Naive thymus-derived CD4-positive, alpha-beta T cell (primary cell): ENCODE measurements at regions of chr3 and their contacts with region 1.

Region 1: GRCh38 chr3:100400780-100401673 is at the starts of genes LNP1 and TOMM70:
- DNase-seq: peak; percentile 83 to 95 (median 94)
- ATAC-seq: peak; percentile 93
- H3K4me3 ChIP-seq: peak within 1 kb of the TSS; percentile 90
- H3K4me3 Mint-ChIP-seq: peak within 1 kb of the TSS; percentile 87 to 99 (median 96)
- H3K27ac ChIP-seq: peak within 1 kb of the TSS; percentile 85
- H3K27ac Mint-ChIP-seq: peak within 1 kb of the TSS; percentile 90 to 98 (median 95)
- H3K4me1 ChIP-seq: peaks cover 21 to 34% of the 10 kb centered on the region in 2 donors
- H3K4me1 Mint-ChIP-seq: peaks cover 36 to 90% (median 77%) of the 10 kb centered on the region in 7 donors
- H3K27me3 ChIP-seq: no peaks in the 10 kb centered on the region
- H3K27me3 Mint-ChIP-seq: no peaks in the 10 kb centered on the region
- total RNA-seq, gene LNP1: 0.82 to 2.4 (median 1.6) TPM
- total RNA-seq, gene TOMM70: 18.3 to 43.7 (median 35.5) TPM

Region 2: GRCh38 chr3:99817437-99818240 is 583.4 kb before region 1 on chr3 and contains the start of gene CMSS1:
- CTCF ChIA-PET with region 1: no interaction called
- POLR2A ChIA-PET with region 1: no interaction called
- intact Hi-C with region 1: loop called (anchors 1 kb)
- DNase-seq: peak; percentile 96 to 98 (median 97)
- ATAC-seq: peak; percentile 94
- H3K4me3 ChIP-seq: peak within 1 kb of the TSS; percentile 80
- H3K4me3 Mint-ChIP-seq: peak within 1 kb of the TSS; percentile 84 to 99 (median 95)
- H3K27ac ChIP-seq: peak within 1 kb of the TSS; percentile 90
- H3K27ac Mint-ChIP-seq: peak within 1 kb of the TSS; percentile 93 to 100 (median 100)
- H3K4me1 ChIP-seq: peaks cover 18 to 22% of the 10 kb centered on the region in 2 donors
- H3K4me1 Mint-ChIP-seq: peaks cover 19 to 62% (median 41%) of the 10 kb centered on the region in 7 donors
- H3K27me3 ChIP-seq: no peaks in the 10 kb centered on the region
- H3K27me3 Mint-ChIP-seq: no peaks in the 10 kb centered on the region
- total RNA-seq, gene CMSS1: 14.9 to 47.7 (median 18.2) TPM

Region 3: DNA sequence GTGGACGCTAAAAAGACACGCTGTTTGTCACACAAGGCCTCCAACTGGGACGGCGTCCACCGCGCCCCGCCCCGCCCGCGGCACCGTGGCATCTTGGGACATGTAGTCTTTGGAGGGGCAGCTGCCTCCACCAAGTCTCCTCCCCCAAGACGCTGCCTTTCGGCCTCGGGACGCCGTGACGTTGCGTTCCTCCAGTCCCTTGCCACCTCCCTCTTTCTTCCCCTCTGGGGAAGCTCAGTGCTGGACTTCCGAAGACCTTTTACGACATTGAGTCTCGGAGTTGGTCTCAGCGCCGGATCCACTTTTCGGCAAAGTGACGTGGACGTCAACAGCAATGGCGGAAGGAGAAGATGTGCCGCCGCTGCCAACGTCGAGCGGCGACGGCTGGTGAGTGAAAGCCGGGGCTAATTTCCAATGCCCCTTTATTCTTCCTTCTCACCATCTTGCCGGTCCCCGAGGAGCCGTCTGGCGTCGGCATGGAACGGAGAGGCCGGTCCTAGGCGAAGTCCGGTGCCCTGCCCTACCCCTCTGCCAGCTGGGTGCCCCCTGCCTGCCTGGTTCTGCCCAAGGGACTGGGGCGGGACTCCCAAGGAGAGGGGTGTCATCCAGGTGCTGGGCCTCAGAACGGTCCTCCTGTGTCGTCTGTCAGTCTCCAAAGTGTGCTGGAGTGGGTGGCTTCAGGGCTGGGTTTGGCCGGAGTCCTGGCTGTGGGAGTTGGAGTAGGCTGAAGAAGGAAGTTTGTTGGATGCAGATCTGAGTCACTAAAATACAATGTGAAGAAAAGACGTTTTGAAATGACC is 140.1 kb before region 1 on chr3 and contains the start of gene TBC1D23:
- CTCF ChIA-PET with region 1: interaction called, 4 read pairs
- POLR2A ChIA-PET with region 1: interaction called, 14 read pairs
- intact Hi-C with region 1: loop called (anchors 1 kb)
- DNase-seq: peak; percentile 89 to 98 (median 96)
- ATAC-seq: peak; percentile 99
- H3K4me3 ChIP-seq: peak within 1 kb of the TSS; percentile 92
- H3K4me3 Mint-ChIP-seq: peak within 1 kb of the TSS; percentile 90 to 100 (median 94)
- H3K27ac ChIP-seq: peak within 1 kb of the TSS; percentile 89
- H3K27ac Mint-ChIP-seq: peak within 1 kb of the TSS; percentile 97 to 100 (median 99)
- H3K4me1 ChIP-seq: peaks cover 10 to 20% of the 10 kb centered on the region in 2 donors
- H3K4me1 Mint-ChIP-seq: peaks cover 37 to 75% (median 65%) of the 10 kb centered on the region in 7 donors
- H3K27me3 ChIP-seq: no peaks in the 10 kb centered on the region
- H3K27me3 Mint-ChIP-seq: no peaks in the 10 kb centered on the region
- total RNA-seq, gene TBC1D23: 30.8 to 42.4 (median 33.9) TPM

Region 4: GRCh38 chr3:100492059-100493006 is 91.3 kb after region 1 on chr3 and contains the start of gene TMEM45A:
- CTCF ChIA-PET with region 1: no interaction called
- POLR2A ChIA-PET with region 1: no interaction called
- intact Hi-C with region 1: loop called (anchors 1 kb)
- DNase-seq: peak; percentile 20 to 85 (median 69)
- ATAC-seq: peak; percentile 97
- H3K4me3 ChIP-seq: peak within 1 kb of the TSS; percentile 64
- H3K4me3 Mint-ChIP-seq: peak within 1 kb of the TSS; percentile 76 to 91 (median 85)
- H3K27ac ChIP-seq: no peak within 1 kb of the TSS
- H3K27ac Mint-ChIP-seq: peak within 1 kb of the TSS in 3 of 9 donors; percentile 22 to 51 (median 49)
- H3K4me1 ChIP-seq: peaks cover 6% of the 10 kb centered on the region in 2 donors
- H3K4me1 Mint-ChIP-seq: peaks cover 5 to 14% (median 9%) of the 10 kb centered on the region in 7 donors
- H3K27me3 ChIP-seq: no peaks in the 10 kb centered on the region
- H3K27me3 Mint-ChIP-seq: peaks cover 6 to 42% (median 17%) of the 10 kb centered on the region in 5 donors
- total RNA-seq, gene TMEM45A: 0.11 to 0.44 (median 0.21) TPM

Region 5: GRCh38 chr3:101518421-101518871 is 1117.4 kb after region 1 on chr3:
- CTCF ChIA-PET with region 1: no interaction called
- POLR2A ChIA-PET with region 1: no interaction called
- intact Hi-C with region 1: loop called in 1 of 2 experiments (anchors 1 kb)
- DNase-seq: peak in 8 of 9 donors; percentile 40 to 82 (median 76)
- ATAC-seq: peak; percentile 91
- H3K4me3 ChIP-seq: peak overlapping the region; percentile 17
- H3K4me3 Mint-ChIP-seq: peak overlapping the region; percentile 35 to 82 (median 62)
- H3K27ac ChIP-seq: peak overlapping the region; percentile 77
- H3K27ac Mint-ChIP-seq: peak overlapping the region; percentile 87 to 98 (median 96)
- H3K4me1 ChIP-seq: peaks cover 54 to 62% of the 10 kb centered on the region in 2 donors
- H3K4me1 Mint-ChIP-seq: peaks cover 20 to 80% (median 71%) of the 10 kb centered on the region in 7 donors
- H3K27me3 ChIP-seq: no peaks in the 10 kb centered on the region
- H3K27me3 Mint-ChIP-seq: no peaks in the 10 kb centered on the region

Region 6: DNA sequence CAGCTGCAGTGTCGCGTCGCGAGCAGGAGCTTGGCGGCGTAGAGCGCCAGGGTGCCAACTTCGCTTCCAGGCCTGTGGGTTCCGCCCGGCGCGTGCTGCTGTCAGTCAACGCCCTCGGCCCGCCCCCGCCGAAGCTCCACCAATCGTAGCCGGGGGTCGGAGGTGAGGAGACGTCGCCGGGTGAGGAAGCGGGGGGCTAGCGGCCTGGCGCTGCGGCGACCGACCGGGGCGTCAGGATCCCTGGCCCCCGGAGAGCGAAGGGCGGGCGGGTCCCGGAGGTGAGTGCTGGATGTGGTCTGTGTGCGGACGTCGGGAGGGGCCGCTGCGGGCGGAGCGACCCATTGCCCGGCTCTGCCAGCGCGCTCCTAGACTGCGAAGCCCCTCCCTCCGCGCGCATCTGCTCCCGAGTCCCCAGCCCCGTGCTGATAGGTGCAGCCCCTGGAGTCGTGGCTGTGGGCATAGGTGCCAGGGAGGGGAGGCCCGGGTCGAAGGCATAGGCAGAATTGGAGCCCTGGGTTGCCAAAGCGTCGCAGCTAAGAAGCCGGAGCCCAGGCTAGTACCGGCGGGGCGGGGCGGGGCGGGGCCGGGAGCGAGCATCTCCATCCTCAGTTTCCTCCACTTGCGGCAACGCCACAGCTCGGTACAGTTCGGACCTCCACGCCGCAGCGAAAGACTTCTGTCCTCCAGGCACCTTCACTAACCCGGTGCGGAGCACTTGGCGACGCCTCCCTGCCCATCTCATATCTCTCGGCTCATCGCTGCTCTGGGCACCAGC is 1378.2 kb after region 1 on chr3 and contains the start of gene NXPE3:
- CTCF ChIA-PET with region 1: no interaction called
- POLR2A ChIA-PET with region 1: no interaction called
- intact Hi-C with region 1: loop called in 1 of 2 experiments (anchors 2 kb)
- DNase-seq: peak; percentile 92 to 97 (median 94)
- ATAC-seq: peak; percentile 95
- H3K4me3 ChIP-seq: peak within 1 kb of the TSS; percentile 60
- H3K4me3 Mint-ChIP-seq: peak within 1 kb of the TSS; percentile 89 to 99 (median 94)
- H3K27ac ChIP-seq: peak within 1 kb of the TSS; percentile 88
- H3K27ac Mint-ChIP-seq: peak within 1 kb of the TSS; percentile 93 to 100 (median 99)
- H3K4me1 ChIP-seq: peaks cover 27% of the 10 kb centered on the region in 2 donors
- H3K4me1 Mint-ChIP-seq: peaks cover 20 to 61% (median 53%) of the 10 kb centered on the region in 7 donors
- H3K27me3 ChIP-seq: no peaks in the 10 kb centered on the region
- H3K27me3 Mint-ChIP-seq: no peaks in the 10 kb centered on the region
- total RNA-seq, gene NXPE3: 25.9 to 48.7 (median 35.5) TPM